Activated B cell treated with CpG ODN at 0.5 μM for 24 hours (primary cell): ENCODE measurements at regions of chr10 and their contacts with region 1.

Region 1: GRCh38 chr10:70549962-70550458 is 52.5 kb downstream of the PRF1 start:
- DNase-seq: peak; percentile 58
- ATAC-seq: peak; percentile 75
- H3K4me3 Mint-ChIP-seq: no peak overlapping the region
- H3K27ac Mint-ChIP-seq: no peak overlapping the region
- H3K4me1 Mint-ChIP-seq: no peaks in the 10 kb centered on the region
- H3K27me3 Mint-ChIP-seq: no peaks in the 10 kb centered on the region
- CTCF ChIP-seq: no peak

Region 2: GRCh38 chr10:70758757-70759514 is 208.9 kb after region 1 on chr10:
- CTCF ChIA-PET with region 1: interaction called, 10 read pairs
- POLR2A ChIA-PET with region 1: no interaction called
- intact Hi-C with region 1: loop called (anchors 1 kb)
- DNase-seq: no peak
- ATAC-seq: peak; percentile 34
- H3K4me3 Mint-ChIP-seq: no peak overlapping the region
- H3K27ac Mint-ChIP-seq: no peak overlapping the region
- H3K4me1 Mint-ChIP-seq: no peaks in the 10 kb centered on the region
- H3K27me3 Mint-ChIP-seq: peaks cover 6% of the 10 kb centered on the region
- CTCF ChIP-seq: peak; percentile 23

Region 3: GRCh38 chr10:70880077-70880534 is 330.1 kb after region 1 on chr10:
- CTCF ChIA-PET with region 1: interaction called, 4 read pairs
- POLR2A ChIA-PET with region 1: no interaction called
- intact Hi-C with region 1: loop called (anchors 1 kb)
- DNase-seq: peak; percentile 40
- ATAC-seq: peak; percentile 96
- H3K4me3 Mint-ChIP-seq: no peak overlapping the region
- H3K27ac Mint-ChIP-seq: peak overlapping the region; percentile 25
- H3K4me1 Mint-ChIP-seq: peaks cover 4% of the 10 kb centered on the region
- H3K27me3 Mint-ChIP-seq: no peaks in the 10 kb centered on the region
- CTCF ChIP-seq: peak; percentile 84

Region 4: DNA sequence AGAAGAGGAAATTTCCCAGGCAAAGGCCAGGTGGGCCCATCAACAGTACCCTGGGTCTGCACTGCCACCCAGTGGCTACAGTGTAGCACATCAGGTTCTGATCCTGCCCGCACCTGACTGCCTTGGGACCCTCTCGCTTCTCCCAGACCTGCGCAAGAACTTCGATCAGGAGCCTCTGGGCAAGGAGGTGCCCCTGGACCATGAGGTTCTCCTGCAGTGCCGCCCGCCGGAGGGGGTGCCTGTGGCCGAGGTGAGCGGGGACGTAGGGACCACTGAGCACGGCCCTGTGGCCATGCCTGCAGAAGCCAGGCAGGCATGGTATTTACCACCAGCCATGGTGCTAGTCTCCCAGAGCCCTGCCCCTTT is 735.2 kb after region 1 on chr10:
- CTCF ChIA-PET with region 1: no interaction called
- POLR2A ChIA-PET with region 1: no interaction called
- intact Hi-C with region 1: loop called (anchors 5 kb)
- DNase-seq: peak; percentile 26
- ATAC-seq: peak; percentile 76
- H3K4me3 Mint-ChIP-seq: no peak overlapping the region
- H3K27ac Mint-ChIP-seq: no peak overlapping the region
- H3K4me1 Mint-ChIP-seq: peaks cover 4% of the 10 kb centered on the region
- H3K27me3 Mint-ChIP-seq: peaks cover under 1% of the 10 kb centered on the region
- CTCF ChIP-seq: no peak